WTC11 (cell line): ENCODE measurements at regions of chr3 and their contacts with region 1.

Region 1: DNA sequence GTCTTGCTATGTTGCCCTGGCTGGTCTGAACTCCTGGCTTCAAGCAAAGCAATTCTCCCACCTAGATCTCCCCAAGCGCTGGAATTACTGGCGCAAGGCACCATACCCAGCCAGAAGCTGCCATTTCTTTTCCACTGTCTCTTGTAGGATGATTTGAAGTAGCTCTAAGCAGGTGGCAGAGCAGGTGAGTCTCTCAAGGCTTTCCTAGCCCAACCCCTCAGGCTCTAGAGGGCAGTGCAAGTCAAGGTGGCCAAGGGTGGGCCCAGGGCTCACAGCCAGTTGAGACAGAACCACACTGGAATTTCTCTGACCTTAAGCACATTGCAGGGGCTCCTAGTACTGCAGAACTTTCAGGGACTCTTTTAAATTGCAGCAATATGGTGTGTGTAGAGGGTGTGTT is 15.6 kb upstream of the DAG1 start:
- DNase-seq: peak; percentile 76
- ATAC-seq: peak; percentile 92
- H3K4me3 Mint-ChIP-seq: no peak overlapping the region
- H3K27ac Mint-ChIP-seq: no peak overlapping the region
- H3K4me1 Mint-ChIP-seq: peaks cover 25% of the 10 kb centered on the region
- H3K27me3 Mint-ChIP-seq: no peaks in the 10 kb centered on the region
- CTCF ChIP-seq: no peak

Region 2: DNA sequence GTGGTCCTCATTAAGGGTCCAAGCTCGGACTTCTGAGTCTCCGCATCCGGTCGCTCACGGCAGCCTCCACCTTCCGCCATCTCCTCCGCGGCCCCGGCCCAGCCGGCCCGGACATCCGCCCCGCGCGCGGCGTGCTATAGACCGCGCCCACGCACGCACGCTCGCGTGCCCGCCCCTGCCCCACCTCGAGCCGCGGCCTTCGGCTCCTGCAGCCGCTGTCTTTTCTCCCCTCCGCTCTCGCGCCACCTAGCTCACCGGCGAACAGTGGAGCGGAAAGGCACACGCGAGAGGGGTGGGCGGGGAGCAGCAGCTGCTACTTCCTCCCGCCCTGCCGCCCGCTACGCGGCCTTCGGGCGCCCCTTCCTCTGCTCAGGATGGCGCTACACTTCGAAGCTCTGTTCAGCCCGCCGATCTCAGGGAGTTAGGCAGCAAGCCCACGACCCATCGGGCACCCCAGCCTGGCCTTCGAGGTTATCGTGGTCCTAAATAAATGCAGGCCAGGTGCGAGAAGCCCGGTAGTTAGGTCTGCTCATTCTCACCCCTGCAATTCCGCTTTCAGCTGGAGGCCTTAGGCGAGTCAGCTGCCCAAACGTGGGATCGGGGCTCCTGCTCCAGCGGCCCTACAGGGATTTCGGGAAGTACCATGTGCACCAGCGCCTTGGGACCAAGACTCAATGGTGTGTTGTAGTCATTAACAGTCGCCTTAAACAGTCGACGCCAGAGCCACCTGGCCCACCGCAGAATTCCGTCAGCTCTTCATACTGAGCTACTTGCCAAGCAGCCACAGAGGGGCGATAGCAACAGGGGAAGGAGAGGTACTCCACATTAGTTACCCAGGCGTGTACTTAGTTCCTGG is 114.3 kb before region 1 on chr3 and contains the start of gene USP4:
- CTCF ChIA-PET with region 1: interaction called, 51 read pairs
- POLR2A ChIA-PET with region 1: interaction called, 3 read pairs
- DNase-seq: peak; percentile 75
- ATAC-seq: peak; percentile 83
- H3K4me3 Mint-ChIP-seq: peak within 1 kb of the TSS; percentile 88
- H3K27ac Mint-ChIP-seq: peak within 1 kb of the TSS; percentile 90
- H3K4me1 Mint-ChIP-seq: peaks cover 12% of the 10 kb centered on the region
- H3K27me3 Mint-ChIP-seq: no peaks in the 10 kb centered on the region
- CTCF ChIP-seq: no peak
- total RNA-seq, gene USP4: 29.1 to 38.5 TPM (median 36.6 TPM) in 3 replicates

Region 3: GRCh38 chr3:49469936-49470713 is 15.7 kb after region 1 on chr3 and contains the start of gene DAG1:
- CTCF ChIA-PET with region 1: interaction called, 60 read pairs
- POLR2A ChIA-PET with region 1: interaction called, 125 read pairs
- DNase-seq: peak; percentile 99
- ATAC-seq: peak; percentile 89
- H3K4me3 Mint-ChIP-seq: peak within 1 kb of the TSS; percentile 95
- H3K27ac Mint-ChIP-seq: peak within 1 kb of the TSS; percentile 100
- H3K4me1 Mint-ChIP-seq: peaks cover 27% of the 10 kb centered on the region
- H3K27me3 Mint-ChIP-seq: no peaks in the 10 kb centered on the region
- CTCF ChIP-seq: no peak
- total RNA-seq, gene DAG1: 113 to 119 TPM (median 115 TPM) in 3 replicates

Region 4: DNA sequence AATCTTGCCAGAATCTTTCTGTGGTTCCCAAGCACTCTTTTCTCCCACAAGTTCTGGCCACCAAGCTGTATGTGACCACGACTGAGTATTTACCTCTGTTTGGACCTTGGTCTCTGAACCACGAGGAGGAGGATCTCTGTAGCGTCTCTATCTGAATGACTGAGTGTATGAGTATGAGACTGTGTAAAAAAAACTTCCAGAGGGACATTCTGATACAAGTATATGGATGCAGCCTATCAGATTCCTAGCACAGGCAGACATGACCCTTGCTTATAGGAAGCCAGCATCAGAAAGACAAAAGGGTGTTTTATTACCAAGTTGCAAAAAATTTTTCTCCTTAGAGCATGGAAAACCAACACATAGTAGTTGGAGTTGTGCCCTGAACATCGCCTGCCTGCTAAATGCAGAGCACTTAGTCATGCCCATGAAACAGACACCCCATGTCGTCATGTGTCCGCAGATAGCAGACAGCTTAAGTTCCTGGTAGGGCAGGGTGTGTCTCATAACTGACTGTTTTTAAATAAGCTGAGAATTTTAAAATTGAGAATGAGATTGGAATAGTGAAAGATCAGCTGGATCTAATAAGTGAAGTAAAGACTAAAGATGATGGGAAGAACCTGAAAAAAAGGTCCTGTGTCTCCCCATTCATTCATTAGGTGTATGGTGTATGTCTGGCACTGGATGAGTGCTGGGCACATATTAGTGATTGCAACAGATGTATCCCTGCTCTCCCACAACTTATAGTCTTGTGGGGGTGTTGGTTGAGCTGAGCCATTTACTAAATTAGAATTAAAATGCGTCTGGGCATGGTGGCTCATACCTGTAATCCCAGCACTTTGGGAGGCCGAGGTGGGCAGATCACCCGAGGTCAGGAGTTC is 46.5 kb after region 1 on chr3:
- CTCF ChIA-PET with region 1: interaction called, 19 read pairs
- POLR2A ChIA-PET with region 1: no interaction called
- DNase-seq: no peak
- ATAC-seq: no peak
- H3K4me3 Mint-ChIP-seq: no peak overlapping the region
- H3K27ac Mint-ChIP-seq: peak overlapping the region; percentile 79
- H3K4me1 Mint-ChIP-seq: no peaks in the 10 kb centered on the region; the same call in 1 of the 2 replicates
- H3K27me3 Mint-ChIP-seq: no peaks in the 10 kb centered on the region
- CTCF ChIP-seq: no peak

Region 5: DNA sequence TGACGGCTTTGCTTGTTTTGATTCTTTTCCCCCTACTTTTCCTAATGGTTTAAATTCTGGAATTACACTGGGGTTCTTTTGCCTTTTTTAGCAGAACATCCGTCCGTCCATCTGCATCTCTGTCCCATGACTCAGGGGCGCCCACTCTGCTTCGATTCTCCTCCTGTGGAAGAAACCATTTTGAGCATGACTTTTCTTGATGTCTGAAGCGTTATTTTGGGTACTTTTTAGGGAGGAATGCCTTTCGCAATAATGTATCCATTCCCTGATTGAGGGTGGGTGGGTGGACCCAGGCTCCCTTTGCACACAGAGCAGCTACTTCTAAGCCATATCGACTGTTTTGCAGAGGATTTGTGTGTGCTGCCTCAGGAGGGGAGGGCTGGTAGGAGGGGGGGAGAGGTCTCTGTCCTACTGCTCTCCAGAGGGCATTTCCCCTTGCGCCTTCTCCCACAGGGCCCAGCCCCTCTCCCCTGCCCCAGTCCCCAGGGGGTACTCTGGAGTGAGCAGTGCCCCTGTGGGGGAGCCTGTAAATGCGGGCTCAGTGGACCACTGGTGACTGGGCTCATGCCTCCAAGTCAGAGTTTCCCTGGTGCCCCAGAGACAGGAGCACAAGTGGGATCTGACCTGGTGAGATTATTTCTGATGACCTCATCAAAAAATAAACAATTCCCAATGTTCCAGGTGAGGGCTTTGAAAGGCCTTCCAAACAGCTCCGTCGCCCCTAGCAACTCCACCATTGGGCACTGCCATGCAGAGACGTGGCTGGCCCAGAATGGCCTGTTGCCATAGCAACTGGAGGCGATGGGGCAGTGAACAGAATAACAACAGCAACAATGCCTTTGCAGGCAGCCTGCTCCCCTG is 80.4 kb after region 1 on chr3:
- CTCF ChIA-PET with region 1: interaction called, 62 read pairs
- POLR2A ChIA-PET with region 1: interaction called, 10 read pairs
- DNase-seq: peak; percentile 73
- ATAC-seq: peak; percentile 9
- H3K4me3 Mint-ChIP-seq: no peak overlapping the region
- H3K27ac Mint-ChIP-seq: peak overlapping the region; percentile 41; the same call in 1 of the 2 replicates
- H3K4me1 Mint-ChIP-seq: peaks cover 17% of the 10 kb centered on the region
- H3K27me3 Mint-ChIP-seq: no peaks in the 10 kb centered on the region
- CTCF ChIP-seq: no peak